HepG2 (cell line): ENCODE measurements at regions of chr4 and their contacts with region 1.

Region 1: DNA sequence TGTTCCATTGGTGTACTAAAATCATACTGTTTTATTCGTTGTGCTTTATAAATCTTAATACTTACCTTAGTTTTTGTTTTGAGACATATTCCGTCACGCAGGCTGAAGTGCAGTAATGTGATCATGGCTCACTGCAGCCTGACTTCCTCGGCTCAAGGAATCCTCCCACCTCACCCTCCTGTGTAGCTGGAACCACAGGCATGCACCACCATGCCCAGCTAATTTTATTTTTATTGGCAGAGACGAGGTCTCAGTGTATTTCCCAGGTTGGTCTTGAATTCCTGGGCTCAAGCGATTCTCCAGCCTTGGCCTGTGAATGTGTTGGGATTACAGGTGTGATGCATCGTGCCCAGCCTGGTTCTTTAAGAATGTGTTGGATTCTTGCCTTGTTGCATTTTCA is 24.4 kb upstream of the DCK start:
- DNase-seq: no peak
- ATAC-seq: no peak
- H3K4me3 ChIP-seq: no peak overlapping the region
- H3K27ac ChIP-seq: no peak overlapping the region
- H3K4me1 ChIP-seq: peaks cover 20% of the 10 kb centered on the region
- H3K27me3 ChIP-seq: no peaks in the 10 kb centered on the region
- CTCF ChIP-seq: no peak
- EP300 ChIP-seq: no peak
- POLR2A ChIP-seq: no peak
- RAD21 ChIP-seq: no peak

Region 2: DNA sequence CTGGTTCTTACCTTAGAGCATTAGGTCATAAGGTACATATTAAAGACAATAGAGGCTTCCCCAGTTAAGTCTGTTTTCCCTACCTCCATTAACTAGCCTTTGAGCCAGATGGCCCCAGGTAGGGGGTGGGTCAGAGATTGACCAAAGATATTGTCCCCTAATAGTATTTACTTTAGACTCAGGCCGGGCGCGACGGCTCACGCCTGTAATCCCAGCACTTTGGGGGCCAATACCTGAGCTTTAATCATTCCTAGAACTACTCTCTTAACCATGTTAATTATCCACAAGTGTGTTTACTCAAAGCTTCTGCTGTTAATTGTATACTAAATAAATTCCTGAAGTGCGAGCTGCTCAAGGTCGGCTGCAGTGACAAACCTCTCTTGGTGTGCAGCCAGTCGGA is 405.0 kb before region 1 on chr4:
- CTCF ChIA-PET with region 1: no interaction called
- POLR2A ChIA-PET with region 1: no interaction called
- in situ Hi-C with region 1: no loop called
- intact Hi-C with region 1: no loop called
- DNase-seq: peak; percentile 75
- ATAC-seq: peak; percentile 86
- H3K4me3 ChIP-seq: no peak overlapping the region
- H3K27ac ChIP-seq: no peak overlapping the region
- H3K4me1 ChIP-seq: peaks cover 29% of the 10 kb centered on the region
- H3K27me3 ChIP-seq: no peaks in the 10 kb centered on the region
- CTCF ChIP-seq: no peak
- EP300 ChIP-seq: no peak
- POLR2A ChIP-seq: no peak
- RAD21 ChIP-seq: no peak

Region 3: DNA sequence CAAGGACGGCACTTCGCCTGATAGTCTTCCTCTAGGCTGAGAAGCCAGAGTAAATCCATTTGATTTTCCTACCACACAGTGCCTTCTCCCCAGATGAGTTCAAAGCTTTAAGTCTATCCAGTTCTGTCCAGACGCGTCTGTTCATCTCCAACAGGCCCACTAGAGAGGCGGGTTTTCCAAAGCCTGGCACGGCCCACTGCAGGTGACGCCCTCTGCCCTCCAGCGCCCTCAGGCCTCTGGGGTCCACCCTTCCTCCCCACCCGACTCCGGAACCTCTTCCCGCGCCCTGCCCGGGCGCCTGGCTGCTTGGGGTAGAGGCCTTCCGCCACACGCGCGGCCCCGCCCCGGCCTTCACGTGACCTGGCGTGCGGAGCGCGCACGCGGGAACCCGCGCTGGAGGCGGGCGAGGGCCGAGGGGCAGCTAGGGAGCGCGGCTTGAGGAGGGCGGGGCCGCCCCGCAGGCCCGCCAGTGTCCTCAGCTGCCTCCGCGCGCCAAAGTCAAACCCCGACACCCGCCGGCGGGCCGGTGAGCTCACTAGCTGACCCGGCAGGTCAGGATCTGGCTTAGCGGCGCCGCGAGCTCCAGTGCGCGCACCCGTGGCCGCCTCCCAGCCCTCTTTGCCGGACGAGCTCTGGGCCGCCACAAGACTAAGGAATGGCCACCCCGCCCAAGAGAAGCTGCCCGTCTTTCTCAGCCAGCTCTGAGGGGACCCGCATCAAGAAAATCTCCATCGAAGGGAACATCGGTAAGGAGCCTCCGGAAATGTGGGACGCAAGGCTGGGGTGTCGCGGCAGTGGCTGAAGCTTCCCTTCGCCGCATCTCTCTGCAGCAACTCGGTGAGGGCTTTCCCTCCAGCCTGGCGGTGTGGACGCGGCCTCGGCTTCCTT is 24.3 kb after region 1 on chr4 and contains the start of gene DCK:
- CTCF ChIA-PET with region 1: no interaction called
- POLR2A ChIA-PET with region 1: interaction called, 18 read pairs
- in situ Hi-C with region 1: no loop called
- intact Hi-C with region 1: loop called (anchors 2 kb)
- DNase-seq: peak; percentile 85
- ATAC-seq: peak; percentile 93
- H3K4me3 ChIP-seq: peak within 1 kb of the TSS; percentile 67 to 92 (median 89)
- H3K27ac ChIP-seq: peak within 1 kb of the TSS; percentile 83
- H3K4me1 ChIP-seq: peaks cover 43% of the 10 kb centered on the region
- H3K27me3 ChIP-seq: no peaks in the 10 kb centered on the region
- CTCF ChIP-seq: peak; percentile 25; the same call in 1 of the 2 replicates
- EP300 ChIP-seq: peak; percentile 8 to 13; a peak in 2 of 4 replicates
- POLR2A ChIP-seq: peak; percentile 81 to 82
- RAD21 ChIP-seq: peak; percentile 57; the same call in 1 of the 2 replicates
- total RNA-seq, gene DCK: 21.8 and 33.5 TPM in 2 replicates